Activated B cell treated with CpG ODN at 0.5 μM for 24 hours (primary cell): ENCODE measurements at regions of chr12 and their contacts with region 1.

Region 1: GRCh38 chr12:92439407-92439779 is 263.4 kb upstream of the PLEKHG7 start:
- DNase-seq: no peak
- ATAC-seq: peak; percentile 51
- H3K4me3 Mint-ChIP-seq: peak overlapping the region; percentile 62
- H3K27ac Mint-ChIP-seq: peak overlapping the region; percentile 97
- H3K4me1 Mint-ChIP-seq: peaks cover 99% of the 10 kb centered on the region
- H3K27me3 Mint-ChIP-seq: no peaks in the 10 kb centered on the region
- CTCF ChIP-seq: no peak

Region 2: GRCh38 chr12:92002673-92003382 is 436.6 kb before region 1 on chr12:
- CTCF ChIA-PET with region 1: no interaction called
- POLR2A ChIA-PET with region 1: interaction called, 10 read pairs
- intact Hi-C with region 1: no loop called
- DNase-seq: no peak
- ATAC-seq: no peak
- H3K4me3 Mint-ChIP-seq: no peak overlapping the region
- H3K27ac Mint-ChIP-seq: no peak overlapping the region
- H3K4me1 Mint-ChIP-seq: peaks cover 13% of the 10 kb centered on the region
- H3K27me3 Mint-ChIP-seq: no peaks in the 10 kb centered on the region
- CTCF ChIP-seq: no peak